K562 (cell line): ENCODE measurements at regions of chr6 and their contacts with region 1.

Region 1: DNA sequence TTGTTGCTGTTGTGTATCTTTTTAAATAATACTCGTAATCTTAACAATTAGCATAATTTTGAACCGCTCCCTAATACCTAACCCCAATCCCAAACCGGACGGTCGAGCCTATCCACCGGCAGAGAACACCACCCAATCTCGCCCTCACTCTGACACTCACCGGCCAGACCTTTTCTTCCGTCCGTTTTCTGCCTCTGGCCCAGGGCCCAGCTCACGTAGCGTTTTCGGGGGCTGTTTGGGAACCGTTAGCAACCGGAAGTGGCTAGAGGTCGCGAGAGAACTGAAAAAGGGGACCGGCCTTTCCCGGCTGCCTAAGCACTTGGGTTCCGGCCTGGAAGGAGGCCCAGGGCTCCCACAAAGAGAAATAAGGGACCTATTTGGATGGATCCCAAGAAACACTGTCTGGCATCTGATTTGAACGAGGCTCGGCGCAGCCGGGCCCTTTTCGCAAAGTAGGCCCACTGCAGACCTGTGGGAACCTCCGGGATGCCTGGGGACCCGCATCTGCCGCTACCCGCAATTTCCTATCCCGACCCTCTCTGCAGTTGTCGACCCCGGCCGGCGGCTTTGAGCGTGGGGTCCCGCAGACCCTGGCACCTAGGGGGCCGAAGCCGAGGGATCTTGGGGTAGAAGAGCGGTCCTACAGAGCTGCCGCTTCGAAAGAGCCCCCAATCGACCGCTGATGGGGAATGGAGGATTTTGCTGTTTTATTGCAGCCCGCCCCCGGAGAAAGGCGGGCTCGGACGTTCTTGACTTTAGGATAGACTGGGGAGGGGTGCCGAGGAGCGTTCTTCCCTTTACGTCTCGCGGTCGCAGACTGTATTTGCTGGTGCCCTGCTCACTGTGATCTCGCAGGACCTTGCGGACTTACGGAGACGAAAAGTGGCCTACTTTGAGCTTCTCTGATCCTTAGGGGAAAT is 4.8 kb upstream of the ZKSCAN8 start:
- DNase-seq: peak; percentile 84 to 99 (median 88)
- ATAC-seq: peak; percentile 80
- H3K4me3 ChIP-seq: peak overlapping the region; percentile 72
- H3K27ac ChIP-seq: peak overlapping the region; percentile 96
- H3K4me1 ChIP-seq: peaks cover 12 to 20% of the 10 kb centered on the region in 2 experiments; a peak in 4 of 5 replicates
- H3K27me3 ChIP-seq: no peaks in the 10 kb centered on the region
- CTCF ChIP-seq: no peak
- EP300 ChIP-seq: peak; percentile 91
- POLR2A ChIP-seq: peak; percentile 93
- RAD21 ChIP-seq: peak; percentile 38 to 48; a peak in 3 of 4 replicates

Region 2: DNA sequence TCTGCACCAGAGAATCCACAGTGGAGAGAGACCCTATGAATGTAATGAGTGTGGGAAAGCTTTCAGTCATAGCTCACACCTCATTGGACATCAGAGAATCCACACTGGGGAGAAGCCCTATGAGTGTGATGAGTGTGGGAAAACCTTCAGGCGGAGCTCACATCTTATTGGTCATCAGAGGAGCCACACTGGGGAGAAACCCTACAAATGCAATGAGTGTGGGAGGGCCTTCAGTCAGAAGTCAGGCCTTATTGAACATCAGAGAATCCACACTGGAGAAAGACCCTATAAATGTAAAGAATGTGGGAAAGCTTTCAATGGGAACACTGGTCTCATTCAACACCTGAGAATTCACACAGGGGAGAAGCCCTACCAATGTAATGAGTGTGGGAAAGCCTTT is 16.7 kb after region 1 on chr6:
- CTCF ChIA-PET with region 1: no interaction called
- POLR2A ChIA-PET with region 1: interaction called, 50 read pairs
- in situ Hi-C with region 1: no loop called
- intact Hi-C with region 1: no loop called
- DNase-seq: no peak
- ATAC-seq: peak; percentile 42; the same call in 2 of the 3 replicates
- H3K4me3 ChIP-seq: no peak overlapping the region
- H3K27ac ChIP-seq: no peak overlapping the region
- H3K4me1 ChIP-seq: no peaks in the 10 kb centered on the region
- H3K27me3 ChIP-seq: no peaks in the 10 kb centered on the region
- CTCF ChIP-seq: no peak
- EP300 ChIP-seq: no peak
- POLR2A ChIP-seq: no peak
- RAD21 ChIP-seq: no peak

Region 3: DNA sequence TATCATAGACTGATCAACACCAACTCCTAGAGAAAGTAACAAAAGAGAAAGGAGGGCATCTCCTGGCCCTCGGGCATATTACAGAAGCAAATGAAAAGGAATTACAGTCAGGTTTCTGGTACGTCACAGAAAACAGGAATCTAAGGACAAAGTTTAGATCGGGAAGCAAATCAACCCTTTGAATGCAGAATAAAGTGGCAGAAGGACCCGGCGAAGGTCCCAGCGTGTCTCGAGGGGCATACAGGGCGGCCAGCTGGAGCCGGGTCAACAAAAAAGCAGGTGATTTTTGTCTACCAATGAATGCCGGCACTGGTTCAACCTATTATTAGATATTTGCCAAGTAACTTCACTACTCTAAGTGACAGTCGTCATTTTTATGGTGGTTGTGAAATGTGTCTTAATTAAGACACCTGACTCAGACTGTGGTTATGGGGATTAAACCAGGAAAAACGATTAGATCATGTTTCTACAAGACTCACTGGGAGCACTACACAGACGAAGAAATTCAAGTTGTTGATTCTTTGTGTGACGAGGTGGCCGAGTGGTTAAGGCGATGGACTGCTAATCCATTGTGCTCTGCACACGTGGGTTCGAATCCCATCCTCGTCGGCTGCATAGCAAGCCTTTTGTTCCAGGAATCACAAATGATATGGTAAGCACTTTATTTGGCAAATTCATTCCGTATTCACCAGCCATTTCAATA is 75.8 kb after region 1 on chr6:
- CTCF ChIA-PET with region 1: no interaction called
- POLR2A ChIA-PET with region 1: interaction called, 6 read pairs
- in situ Hi-C with region 1: no loop called
- intact Hi-C with region 1: loop called (anchors 2 kb)
- DNase-seq: peak; percentile 80 to 95 (median 82)
- ATAC-seq: peak; percentile 78
- H3K4me3 ChIP-seq: peak overlapping the region; percentile 48
- H3K27ac ChIP-seq: peak overlapping the region; percentile 74
- H3K4me1 ChIP-seq: peaks cover 16 to 23% of the 10 kb centered on the region in 2 experiments
- H3K27me3 ChIP-seq: no peaks in the 10 kb centered on the region
- CTCF ChIP-seq: peak in 2 of 3 experiments; percentile 46 to 55; a peak in 5 of 6 replicates
- EP300 ChIP-seq: peak; percentile 84
- POLR2A ChIP-seq: no peak
- RAD21 ChIP-seq: peak; percentile 51 to 60; a peak in 3 of 4 replicates

Region 4: GRCh38 chr6:28225056-28225834 is 88.4 kb after region 1 on chr6 and contains the start of gene ZSCAN9:
- CTCF ChIA-PET with region 1: no interaction called
- POLR2A ChIA-PET with region 1: interaction called, 15 read pairs
- in situ Hi-C with region 1: no loop called
- intact Hi-C with region 1: loop called (anchors 1 kb)
- DNase-seq: peak; percentile 83 to 94 (median 90)
- ATAC-seq: peak; percentile 89
- H3K4me3 ChIP-seq: peak within 1 kb of the TSS; percentile 79
- H3K27ac ChIP-seq: peak within 1 kb of the TSS; percentile 85
- H3K4me1 ChIP-seq: peaks cover 7 to 47% of the 10 kb centered on the region in 2 experiments
- H3K27me3 ChIP-seq: no peaks in the 10 kb centered on the region
- CTCF ChIP-seq: no peak
- EP300 ChIP-seq: peak; percentile 67; the same call in 1 of the 2 replicates
- POLR2A ChIP-seq: peak; percentile 91
- RAD21 ChIP-seq: peak; percentile 21 to 29; a peak in 3 of 4 replicates
- polyA plus RNA-seq, gene ZSCAN9: 18.8 to 20.0 TPM

Region 5: DNA sequence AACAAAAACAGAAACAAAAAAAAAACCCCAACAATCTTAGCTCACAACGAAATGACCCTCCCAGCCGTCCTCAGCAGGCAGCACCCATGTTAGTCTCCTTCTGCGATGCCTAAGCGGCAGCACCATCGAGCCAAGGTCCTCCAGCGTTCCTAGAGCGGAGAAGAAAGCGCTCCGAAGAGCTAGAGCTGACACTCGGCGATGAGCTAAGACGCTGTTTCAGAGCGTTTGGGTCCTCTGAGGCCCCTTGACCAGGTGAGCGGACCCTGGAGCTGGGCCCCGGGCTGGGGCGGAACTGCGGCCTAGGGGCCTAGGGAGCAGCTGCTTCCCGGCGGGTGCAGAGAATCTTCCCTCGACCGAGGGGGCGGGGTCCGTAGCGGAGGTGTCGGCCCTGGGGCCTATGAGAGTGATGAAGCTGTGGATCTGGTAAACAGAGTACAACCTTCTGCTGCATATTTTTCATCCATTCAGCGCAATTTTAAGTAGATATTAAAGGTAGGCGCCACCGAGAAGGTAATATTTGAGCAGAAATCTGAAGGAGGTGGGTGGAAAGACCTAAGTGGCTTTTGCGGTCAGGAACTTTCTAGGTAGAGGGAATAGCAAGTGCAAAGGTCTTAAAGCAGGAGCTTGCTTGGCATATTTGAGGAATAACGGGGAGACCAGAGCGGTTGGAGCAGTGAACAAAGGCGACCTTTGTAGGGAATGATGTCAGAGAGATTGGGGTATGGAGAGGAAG is 130.3 kb after region 1 on chr6 and contains the start of gene ZSCAN26:
- CTCF ChIA-PET with region 1: no interaction called
- POLR2A ChIA-PET with region 1: interaction called, 5 read pairs
- in situ Hi-C with region 1: no loop called
- intact Hi-C with region 1: loop called (anchors 5 kb)
- DNase-seq: peak; percentile 85 to 95 (median 88)
- ATAC-seq: peak; percentile 95
- H3K4me3 ChIP-seq: peak within 1 kb of the TSS; percentile 61
- H3K27ac ChIP-seq: peak within 1 kb of the TSS; percentile 78
- H3K4me1 ChIP-seq: peaks cover 7 to 26% of the 10 kb centered on the region in 2 experiments
- H3K27me3 ChIP-seq: no peaks in the 10 kb centered on the region
- CTCF ChIP-seq: no peak; a peak in 1 of 6 replicates
- EP300 ChIP-seq: no peak
- POLR2A ChIP-seq: peak; percentile 92
- RAD21 ChIP-seq: peak; percentile 7 to 25; a peak in 2 of 4 replicates
- polyA plus RNA-seq, gene ZSCAN26: 7.3 to 12.8 TPM

Region 6: GRCh38 chr6:28489366-28490204 is 352.7 kb after region 1 on chr6:
- CTCF ChIA-PET with region 1: interaction called, 4 read pairs
- POLR2A ChIA-PET with region 1: interaction called, 6 read pairs
- in situ Hi-C with region 1: no loop called
- intact Hi-C with region 1: loop called (anchors 2 kb)
- DNase-seq: peak; percentile 90 to 98 (median 93)
- ATAC-seq: peak; percentile 91
- H3K4me3 ChIP-seq: peak overlapping the region; percentile 57
- H3K27ac ChIP-seq: peak overlapping the region; percentile 88
- H3K4me1 ChIP-seq: peaks cover 9 to 26% of the 10 kb centered on the region in 2 experiments
- H3K27me3 ChIP-seq: no peaks in the 10 kb centered on the region
- CTCF ChIP-seq: no peak
- EP300 ChIP-seq: peak; percentile 62
- POLR2A ChIP-seq: peak; percentile 77
- RAD21 ChIP-seq: no peak

Region 7: DNA sequence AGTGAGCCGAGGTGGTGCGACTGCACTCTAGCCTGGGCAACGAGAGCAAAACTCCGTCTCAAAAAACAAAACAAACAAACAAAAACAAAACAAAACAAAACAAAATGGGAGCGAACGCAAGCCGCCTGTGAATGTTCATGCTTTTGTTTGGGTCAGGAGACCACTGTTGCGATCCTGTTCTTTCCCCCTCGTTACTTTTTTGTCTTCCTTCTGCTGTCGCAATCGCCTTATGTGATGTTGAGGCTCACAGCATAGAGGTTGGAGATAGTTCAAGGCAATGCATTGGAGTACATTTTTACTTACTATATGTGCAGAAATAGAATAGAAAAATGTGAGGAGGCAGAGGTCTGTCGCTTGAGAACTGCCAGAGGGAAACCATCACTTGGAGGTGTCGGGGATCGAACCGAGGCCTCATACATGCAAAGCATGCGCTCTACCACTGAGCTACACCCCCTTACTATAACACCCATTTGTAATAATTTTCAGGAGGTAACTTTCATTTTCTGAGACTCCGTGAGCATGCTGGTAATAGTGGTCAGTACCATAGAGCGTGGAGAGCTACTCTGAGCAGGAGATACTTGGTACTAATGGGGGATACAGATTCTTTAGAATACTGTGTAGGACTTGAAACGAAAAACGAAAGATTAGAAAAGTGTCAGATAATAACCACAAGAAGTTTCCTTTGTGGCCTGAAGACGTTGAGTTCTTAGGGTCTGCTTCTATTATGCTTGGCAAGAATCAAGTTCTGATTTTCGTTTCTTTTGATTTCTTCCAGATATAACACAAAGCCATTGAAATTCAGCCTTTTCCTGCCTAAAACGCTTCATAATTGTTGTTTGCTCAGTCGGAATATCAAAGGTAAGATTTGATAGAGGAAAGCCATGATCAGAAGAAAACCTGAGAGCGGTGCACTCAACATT is 665.8 kb after region 1 on chr6:
- CTCF ChIA-PET with region 1: no interaction called
- POLR2A ChIA-PET with region 1: no interaction called
- in situ Hi-C with region 1: no loop called
- intact Hi-C with region 1: no loop called
- DNase-seq: peak; percentile 68 to 91 (median 72)
- ATAC-seq: peak; percentile 91
- H3K4me3 ChIP-seq: peak overlapping the region; percentile 49
- H3K27ac ChIP-seq: no peak overlapping the region
- H3K4me1 ChIP-seq: peaks cover 4 to 10% of the 10 kb centered on the region in 2 experiments; a peak in 3 of 5 replicates
- H3K27me3 ChIP-seq: no peaks in the 10 kb centered on the region
- CTCF ChIP-seq: no peak
- EP300 ChIP-seq: peak; percentile 54; the same call in 1 of the 2 replicates
- POLR2A ChIP-seq: no peak
- RAD21 ChIP-seq: no peak